Activated CD4-positive, alpha-beta T cell treated with anti-CD3 and anti-CD28 coated beads for 36 hours (primary cell): ENCODE measurements at regions of chr10 and their contacts with region 1.

Region 1: DNA sequence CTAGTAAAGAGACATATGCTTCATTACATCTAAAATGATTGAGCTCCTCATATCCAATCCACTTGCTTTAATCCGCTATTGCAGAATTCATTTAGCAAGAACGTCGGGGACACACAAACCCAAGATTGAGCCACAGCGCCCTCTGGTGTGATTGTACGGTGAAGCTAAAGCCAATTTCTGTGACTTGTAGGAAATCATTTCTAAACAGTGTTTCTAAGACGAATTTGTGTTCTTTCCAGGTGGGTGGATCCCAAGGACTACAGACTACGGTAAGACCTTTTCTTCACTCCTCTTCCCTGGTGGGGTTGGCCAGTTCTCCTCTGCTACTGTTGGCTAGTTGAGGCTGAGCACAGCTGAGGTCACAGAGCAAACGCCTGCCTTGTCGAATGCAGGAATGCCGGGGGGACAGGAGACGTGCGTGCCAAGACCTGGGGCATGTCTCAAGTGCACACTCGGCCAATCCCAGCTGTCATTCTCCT is 5.2 kb downstream of the DMBT1 start:
- DNase-seq: peak; percentile 85
- ATAC-seq: peak; percentile 47
- H3K4me3 Mint-ChIP-seq: no peak overlapping the region
- H3K27ac Mint-ChIP-seq: no peak overlapping the region
- H3K4me1 Mint-ChIP-seq: peaks cover 7% of the 10 kb centered on the region
- H3K27me3 Mint-ChIP-seq: peaks cover 12% of the 10 kb centered on the region

Region 2: GRCh38 chr10:122142641-122143237 is 423.0 kb before region 1 on chr10:
- CTCF ChIA-PET with region 1: no interaction called
- POLR2A ChIA-PET with region 1: no interaction called
- intact Hi-C with region 1: loop called in 1 of 2 experiments (anchors 10 kb)
- DNase-seq: peak; percentile 61
- ATAC-seq: no peak
- H3K4me3 Mint-ChIP-seq: no peak overlapping the region
- H3K27ac Mint-ChIP-seq: no peak overlapping the region
- H3K4me1 Mint-ChIP-seq: no peaks in the 10 kb centered on the region
- H3K27me3 Mint-ChIP-seq: no peaks in the 10 kb centered on the region

Region 3: GRCh38 chr10:122342293-122343134 is 223.3 kb before region 1 on chr10:
- CTCF ChIA-PET with region 1: interaction called, 7 read pairs
- POLR2A ChIA-PET with region 1: no interaction called
- intact Hi-C with region 1: loop called (anchors 1 kb)
- DNase-seq: peak; percentile 73
- ATAC-seq: peak; percentile 82
- H3K4me3 Mint-ChIP-seq: no peak overlapping the region
- H3K27ac Mint-ChIP-seq: no peak overlapping the region
- H3K4me1 Mint-ChIP-seq: peaks cover 11% of the 10 kb centered on the region
- H3K27me3 Mint-ChIP-seq: peaks cover 4% of the 10 kb centered on the region

Region 4: DNA sequence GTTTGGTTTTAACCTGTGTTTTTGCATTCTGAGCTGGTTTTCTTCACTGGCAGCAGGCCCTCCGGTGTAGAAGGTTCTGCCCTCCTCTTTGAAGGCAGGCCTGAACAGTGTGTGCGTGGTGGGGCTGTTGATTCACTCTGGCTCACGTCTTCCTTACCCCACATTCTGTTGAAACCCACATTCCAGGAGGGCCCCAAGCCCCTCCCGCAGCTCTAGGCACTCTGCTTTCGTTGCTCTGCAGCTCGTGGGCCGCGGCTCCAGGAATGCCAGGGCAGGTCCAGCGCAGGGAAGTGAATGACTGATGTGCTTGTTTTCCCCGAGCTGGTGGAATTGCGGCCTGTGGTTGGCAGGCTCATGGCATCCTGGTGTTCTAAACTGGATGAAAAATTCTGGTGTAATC is 55.4 kb before region 1 on chr10:
- CTCF ChIA-PET with region 1: interaction called, 9 read pairs
- POLR2A ChIA-PET with region 1: no interaction called
- intact Hi-C with region 1: loop called in 1 of 2 experiments (anchors 5 kb)
- DNase-seq: no peak
- ATAC-seq: no peak
- H3K4me3 Mint-ChIP-seq: no peak overlapping the region
- H3K27ac Mint-ChIP-seq: no peak overlapping the region
- H3K4me1 Mint-ChIP-seq: peaks cover under 1% of the 10 kb centered on the region
- H3K27me3 Mint-ChIP-seq: no peaks in the 10 kb centered on the region

Region 5: GRCh38 chr10:122703439-122704118 is 137.8 kb after region 1 on chr10:
- CTCF ChIA-PET with region 1: interaction called, 3 read pairs
- POLR2A ChIA-PET with region 1: no interaction called
- intact Hi-C with region 1: loop called (anchors 1 to 2 kb)
- DNase-seq: peak; percentile 77
- ATAC-seq: no peak
- H3K4me3 Mint-ChIP-seq: no peak overlapping the region
- H3K27ac Mint-ChIP-seq: no peak overlapping the region
- H3K4me1 Mint-ChIP-seq: peaks cover 8% of the 10 kb centered on the region
- H3K27me3 Mint-ChIP-seq: peaks cover 4% of the 10 kb centered on the region